Head of caudate nucleus (tissue), 42 donors: ENCODE measurements at regions of chr18 and their contacts with region 1.

Region 1: GRCh38 chr18:58117786-58118403 is 73.9 kb downstream of the NEDD4L start:
- DNase-seq: no peak

Region 2: DNA sequence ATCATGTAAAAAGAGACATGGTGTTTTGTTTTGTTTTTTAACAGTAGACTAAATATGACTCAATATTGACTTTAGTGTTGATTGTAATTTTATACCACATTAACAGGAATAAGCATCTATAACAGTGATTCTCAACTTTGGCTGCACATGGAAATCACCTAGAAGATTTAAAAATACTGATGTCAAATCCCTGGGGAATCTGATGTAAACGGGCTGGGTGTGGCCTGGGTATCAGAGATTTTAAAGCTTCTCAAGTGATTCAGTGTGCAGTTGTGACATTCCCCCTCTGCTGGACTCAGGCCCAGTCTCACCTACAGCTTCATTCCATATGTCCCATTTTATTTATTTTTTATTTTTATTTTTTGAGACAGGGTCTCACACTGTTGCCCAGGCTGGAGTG is 232.0 kb before region 1 on chr18:
- intact Hi-C with region 1: loop called (anchors 5 kb)
- DNase-seq: no peak